Left ventricle myocardium inferior (tissue), 1 donor: ENCODE measurements at regions of chr17 and their contacts with region 1.

Region 1: GRCh38 chr17:55072898-55073297 is 104.3 kb downstream of the STXBP4 start:
- DNase-seq: no peak
- H3K4me3 ChIP-seq: no peak overlapping the region
- H3K27ac ChIP-seq: no peak overlapping the region
- H3K4me1 ChIP-seq: no peaks in the 10 kb centered on the region
- H3K27me3 ChIP-seq: no peaks in the 10 kb centered on the region
- CTCF ChIP-seq: no peak

Region 2: DNA sequence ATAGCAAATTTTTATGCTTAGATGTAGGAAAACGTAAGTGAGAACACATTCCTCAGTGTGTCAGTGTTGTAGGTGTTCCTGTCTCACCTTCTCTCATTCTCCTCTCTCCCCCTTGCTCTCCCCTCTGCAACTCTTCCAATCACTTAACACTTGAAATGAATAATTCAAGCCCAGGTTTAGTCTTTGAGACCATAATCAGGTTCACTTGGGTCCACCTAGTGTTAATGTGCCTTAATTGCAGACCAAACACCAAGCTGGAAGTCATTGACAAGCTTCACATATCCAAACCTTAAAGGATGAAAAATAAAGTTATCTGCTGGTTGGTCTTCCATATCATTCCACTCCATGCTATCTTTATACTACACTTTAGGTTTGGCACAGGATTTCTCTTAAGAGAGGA is 67.4 kb before region 1 on chr17:
- intact Hi-C with region 1: no loop called
- DNase-seq: no peak
- H3K4me3 ChIP-seq: no peak overlapping the region
- H3K27ac ChIP-seq: no peak overlapping the region
- H3K4me1 ChIP-seq: no peaks in the 10 kb centered on the region
- H3K27me3 ChIP-seq: no peaks in the 10 kb centered on the region
- CTCF ChIP-seq: no peak

Region 3: DNA sequence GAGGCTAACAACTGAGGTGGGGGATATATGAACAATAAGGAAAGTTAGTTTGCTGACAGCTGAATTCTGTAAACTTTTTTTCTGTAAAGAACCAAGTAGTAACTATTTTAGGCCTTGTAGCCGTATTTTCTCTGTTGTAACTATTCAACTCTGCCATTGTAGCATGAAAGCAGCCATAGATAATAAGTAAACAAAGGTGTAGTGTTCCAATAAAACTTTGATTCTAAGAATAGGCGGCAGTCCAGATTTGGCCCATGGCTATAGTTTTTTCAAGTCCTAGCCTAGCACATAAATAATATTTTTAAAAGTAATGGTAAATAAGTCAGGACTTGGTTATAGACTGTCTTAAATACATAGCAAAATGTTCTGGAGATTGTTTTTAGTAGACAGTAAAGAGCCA is 37.6 kb after region 1 on chr17:
- intact Hi-C with region 1: loop called (anchors 5 kb)
- DNase-seq: no peak
- H3K4me3 ChIP-seq: no peak overlapping the region
- H3K27ac ChIP-seq: no peak overlapping the region
- H3K4me1 ChIP-seq: no peaks in the 10 kb centered on the region
- H3K27me3 ChIP-seq: no peaks in the 10 kb centered on the region
- CTCF ChIP-seq: no peak

Region 4: GRCh38 chr17:55120651-55121050 is 47.8 kb after region 1 on chr17:
- intact Hi-C with region 1: no loop called
- DNase-seq: no peak
- H3K4me3 ChIP-seq: no peak overlapping the region
- H3K27ac ChIP-seq: no peak overlapping the region
- H3K4me1 ChIP-seq: peaks cover 16% of the 10 kb centered on the region
- H3K27me3 ChIP-seq: no peaks in the 10 kb centered on the region
- CTCF ChIP-seq: no peak